Activated CD8-positive, alpha-beta memory T cell treated with anti-CD3 and anti-CD28 coated beads, Interleukin-2, amount 10 ng/mL, durations not matched to agents 7 days and 5 days (primary cell): ENCODE measurements at regions of chr1 and their contacts with region 1.

Region 1: GRCh38 chr1:32200226-32201010 is at the start of gene CCDC28B:
- DNase-seq: peak; percentile 71
- ATAC-seq: peak; percentile 62
- H3K4me3 Mint-ChIP-seq: peak within 1 kb of the TSS; percentile 87
- H3K27ac Mint-ChIP-seq: peak within 1 kb of the TSS; percentile 94
- H3K4me1 Mint-ChIP-seq: peaks cover 68% of the 10 kb centered on the region
- H3K27me3 Mint-ChIP-seq: no peaks in the 10 kb centered on the region
- total RNA-seq, gene CCDC28B: 33.0 to 43.3 TPM

Region 2: GRCh38 chr1:32179443-32180185 is 20.8 kb before region 1 on chr1 and contains the start of gene TXLNA:
- CTCF ChIA-PET with region 1: interaction called, 18 read pairs
- DNase-seq: peak; percentile 95
- ATAC-seq: peak; percentile 91
- H3K4me3 Mint-ChIP-seq: peak within 1 kb of the TSS; percentile 81
- H3K27ac Mint-ChIP-seq: peak within 1 kb of the TSS; percentile 98
- H3K4me1 Mint-ChIP-seq: peaks cover 41% of the 10 kb centered on the region
- H3K27me3 Mint-ChIP-seq: no peaks in the 10 kb centered on the region
- total RNA-seq, gene TXLNA: 85.8 to 104 TPM